ENCODE measurements at regions of chr7 and their contacts with region 1.

Region 1: GRCh38 chr7:155713384-155713783 is 68.9 kb downstream of the RBM33 start:
- DNase-seq: no peak
- H3K4me3 ChIP-seq: no peak overlapping the region
- H3K27ac ChIP-seq: no peak overlapping the region
- H3K4me1 ChIP-seq: peaks cover 0 to 6% of the 10 kb centered on the region in 2 donors
- H3K27me3 ChIP-seq: no peaks in the 10 kb centered on the region
- CTCF ChIP-seq: no peak
- POLR2A ChIP-seq: no peak

Region 2: DNA sequence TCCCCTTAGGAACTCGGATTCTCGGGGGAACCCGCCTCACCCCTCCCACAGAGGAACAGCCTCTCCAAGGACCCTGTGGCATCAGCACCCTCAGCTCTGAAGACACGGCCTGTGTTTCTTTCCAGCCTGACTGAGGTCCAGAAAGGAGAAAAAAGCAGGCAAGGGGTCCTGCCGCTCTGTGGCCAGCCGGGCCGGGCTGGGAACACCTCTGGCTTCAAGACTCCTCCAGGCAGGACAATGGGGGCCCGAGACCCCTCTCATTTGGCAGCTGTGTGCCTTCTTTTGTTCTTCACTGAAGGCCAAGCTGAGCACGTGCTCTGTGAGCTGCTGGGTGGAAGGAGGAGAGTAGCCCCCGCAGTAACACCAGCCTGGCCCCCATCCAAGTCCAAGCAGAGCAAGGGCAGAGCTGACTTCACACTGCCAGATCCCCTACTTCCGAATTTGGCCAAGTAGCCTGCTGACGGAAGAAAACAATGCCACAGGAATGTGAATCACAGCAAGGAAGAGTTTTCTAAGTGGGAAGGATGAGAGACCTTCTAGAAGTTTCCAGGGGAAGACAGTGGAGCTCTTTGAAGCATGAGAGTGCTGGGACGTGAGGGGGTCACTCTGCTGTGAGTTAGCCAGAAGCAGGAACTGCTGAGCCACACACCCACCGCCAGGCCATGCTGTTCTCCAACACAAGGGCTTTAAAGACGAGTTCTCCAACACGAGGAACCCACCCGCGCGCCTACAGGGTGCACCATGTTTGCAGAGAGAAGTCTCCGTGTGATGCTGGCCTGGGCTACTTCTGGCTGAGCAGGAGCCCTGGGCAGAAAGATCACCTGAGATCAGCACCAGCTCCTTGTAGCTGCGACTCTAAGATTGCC is 170.1 kb before region 1 on chr7:
- intact Hi-C with region 1: no loop called
- DNase-seq: no peak
- H3K4me3 ChIP-seq: no peak overlapping the region
- H3K27ac ChIP-seq: no peak overlapping the region
- H3K4me1 ChIP-seq: no peaks in the 10 kb centered on the region
- H3K27me3 ChIP-seq: no peaks in the 10 kb centered on the region
- CTCF ChIP-seq: no peak
- POLR2A ChIP-seq: no peak

Region 3: GRCh38 chr7:155618708-155619633 is 94.4 kb before region 1 on chr7:
- intact Hi-C with region 1: no loop called
- DNase-seq: no peak
- H3K4me3 ChIP-seq: no peak overlapping the region
- H3K27ac ChIP-seq: no peak overlapping the region
- H3K4me1 ChIP-seq: no peaks in the 10 kb centered on the region
- H3K27me3 ChIP-seq: no peaks in the 10 kb centered on the region
- CTCF ChIP-seq: no peak
- POLR2A ChIP-seq: no peak

Region 4: GRCh38 chr7:155644178-155644970 is 69.0 kb before region 1 on chr7 and contains the start of gene RBM33:
- intact Hi-C with region 1: loop called in 1 of 2 experiments (anchors 10 kb)
- DNase-seq: peak; percentile 75 to 83 (median 78)
- H3K4me3 ChIP-seq: peak within 1 kb of the TSS; percentile 43 to 94 (median 78)
- H3K27ac ChIP-seq: peak within 1 kb of the TSS; percentile 69 to 95 (median 95)
- H3K4me1 ChIP-seq: peaks cover 14 to 25% of the 10 kb centered on the region in 2 donors
- H3K27me3 ChIP-seq: no peaks in the 10 kb centered on the region
- CTCF ChIP-seq: no peak
- POLR2A ChIP-seq: peak in 1 of 2 donors; percentile 45
- total RNA-seq, gene RBM33: 10.3 to 57.1 (median 37.8) TPM

Measured in adrenal gland (tissue), 19 donors.